IMR-90 (cell line): ENCODE measurements at regions of chr19 and their contacts with region 1.

Region 1: DNA sequence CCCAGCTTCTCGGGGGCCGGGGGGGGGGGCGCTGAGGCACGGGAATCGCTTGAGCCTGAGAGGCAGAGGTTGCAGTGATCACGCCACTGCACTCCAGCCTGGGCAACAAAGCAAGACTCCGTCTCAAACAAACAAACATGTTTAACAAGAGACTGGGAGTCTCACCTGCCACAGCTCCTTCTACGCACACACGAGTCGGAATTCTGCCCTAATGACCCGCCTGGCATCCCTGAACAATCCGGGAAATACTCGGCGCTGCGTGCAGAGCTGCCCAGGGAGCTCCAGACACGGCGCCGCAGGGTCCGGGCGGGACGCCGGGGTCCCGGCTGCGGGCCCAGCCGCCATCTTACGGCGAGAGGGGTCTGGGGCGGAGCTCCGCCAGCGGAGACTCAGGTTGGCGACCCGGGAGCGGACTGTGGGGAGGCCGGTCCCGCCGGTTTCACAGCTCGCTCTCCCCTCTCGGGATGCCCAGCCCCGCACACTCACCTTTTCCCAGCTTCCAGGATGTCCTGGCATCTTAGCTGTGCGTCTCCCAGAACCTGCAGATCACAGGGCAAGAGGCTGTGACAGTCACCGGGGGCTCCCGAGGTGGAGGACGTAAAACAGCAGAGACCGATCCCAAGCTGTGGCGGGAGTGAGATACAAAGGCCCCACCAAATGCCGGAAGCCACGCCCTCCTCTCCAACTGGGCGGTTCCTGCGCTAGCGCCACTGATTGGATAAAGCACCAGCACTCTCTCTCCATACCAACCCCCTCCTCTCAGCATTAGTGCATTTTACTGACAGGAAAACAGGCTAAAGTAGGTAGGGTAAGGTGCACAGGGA is 23.6 kb upstream of the ZNF724 start:
- DNase-seq: peak; percentile 85
- ATAC-seq: peak; percentile 99
- H3K4me3 ChIP-seq: peak overlapping the region; percentile 82
- H3K27ac ChIP-seq: peak overlapping the region; percentile 87
- H3K4me1 ChIP-seq: no peaks in the 10 kb centered on the region
- H3K27me3 ChIP-seq: no peaks in the 10 kb centered on the region
- CTCF ChIP-seq: no peak
- POLR2A ChIP-seq: peak; percentile 66; the same call in 1 of the 2 replicates
- RAD21 ChIP-seq: no peak

Region 2: DNA sequence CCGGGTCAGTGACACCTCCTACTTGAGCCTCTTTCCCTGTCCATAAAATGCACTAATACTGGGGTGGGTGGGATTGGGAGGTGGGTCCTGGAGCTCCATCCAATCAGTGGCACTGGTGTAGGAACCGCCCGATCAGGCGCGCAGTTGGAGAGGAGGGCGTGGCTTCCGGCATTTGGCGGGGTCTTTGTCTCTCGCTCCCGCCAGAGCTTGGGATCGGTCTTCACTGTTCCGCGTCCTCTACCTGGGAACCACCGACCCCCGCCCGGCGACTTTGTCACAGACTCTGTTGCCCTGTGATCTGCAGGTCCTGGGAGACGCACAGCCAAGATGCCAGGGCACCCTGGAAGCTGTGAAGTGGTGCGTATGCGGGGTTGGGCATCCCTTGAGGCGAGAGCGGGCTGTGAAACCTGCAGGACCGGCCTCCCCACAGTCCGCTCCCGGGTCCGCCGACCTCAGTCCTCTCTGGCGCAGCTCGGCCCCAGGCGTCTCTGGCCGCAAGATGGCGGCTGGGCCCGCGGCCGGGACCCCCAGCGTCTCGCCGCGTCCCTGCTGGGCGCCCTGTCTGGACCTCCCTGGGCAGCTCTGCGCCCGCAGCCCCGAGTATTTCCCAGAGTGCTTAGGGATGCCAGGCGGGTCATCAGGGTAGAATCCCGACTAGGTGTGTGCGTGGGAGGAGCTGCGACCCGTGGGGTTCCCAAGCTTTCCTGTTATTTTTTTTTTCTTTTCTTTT is 198.6 kb before region 1 on chr19:
- CTCF ChIA-PET with region 1: no interaction called
- POLR2A ChIA-PET with region 1: no interaction called
- dilution Hi-C with region 1: no loop called
- in situ Hi-C with region 1: no loop called
- intact Hi-C with region 1: loop called (anchors 10 kb)
- DNase-seq: peak; percentile 72
- ATAC-seq: peak; percentile 97
- H3K4me3 ChIP-seq: peak overlapping the region; percentile 96
- H3K27ac ChIP-seq: peak overlapping the region; percentile 54; the same call in 1 of the 2 replicates
- H3K4me1 ChIP-seq: no peaks in the 10 kb centered on the region
- H3K27me3 ChIP-seq: no peaks in the 10 kb centered on the region
- CTCF ChIP-seq: no peak
- POLR2A ChIP-seq: peak; percentile 2; the same call in 1 of the 2 replicates
- RAD21 ChIP-seq: no peak

Region 3: GRCh38 chr19:23395041-23395721 is 121.4 kb after region 1 on chr19 and contains the start of gene ZNF91:
- CTCF ChIA-PET with region 1: no interaction called
- POLR2A ChIA-PET with region 1: no interaction called
- dilution Hi-C with region 1: no loop called
- in situ Hi-C with region 1: no loop called
- intact Hi-C with region 1: loop called (anchors 10 kb)
- DNase-seq: peak; percentile 96
- ATAC-seq: peak; percentile 96
- H3K4me3 ChIP-seq: peak within 1 kb of the TSS; percentile 97
- H3K27ac ChIP-seq: peak within 1 kb of the TSS; percentile 97
- H3K4me1 ChIP-seq: no peaks in the 10 kb centered on the region
- H3K27me3 ChIP-seq: no peaks in the 10 kb centered on the region
- CTCF ChIP-seq: no peak
- POLR2A ChIP-seq: peak; percentile 94
- RAD21 ChIP-seq: no peak
- total RNA-seq, gene ZNF91: 17.0 and 21.4 TPM in 2 replicates

Region 4: GRCh38 chr19:23512130-23512919 is 238.5 kb after region 1 on chr19:
- CTCF ChIA-PET with region 1: no interaction called
- POLR2A ChIA-PET with region 1: no interaction called
- dilution Hi-C with region 1: no loop called
- in situ Hi-C with region 1: no loop called
- intact Hi-C with region 1: no loop called
- DNase-seq: no peak
- ATAC-seq: no peak
- H3K4me3 ChIP-seq: no peak overlapping the region
- H3K27ac ChIP-seq: no peak overlapping the region
- H3K4me1 ChIP-seq: no peaks in the 10 kb centered on the region
- H3K27me3 ChIP-seq: no peaks in the 10 kb centered on the region
- CTCF ChIP-seq: no peak
- POLR2A ChIP-seq: no peak
- RAD21 ChIP-seq: no peak